PC-3 (cell line): ENCODE measurements at regions of chr3 and their contacts with region 1.

Region 1: DNA sequence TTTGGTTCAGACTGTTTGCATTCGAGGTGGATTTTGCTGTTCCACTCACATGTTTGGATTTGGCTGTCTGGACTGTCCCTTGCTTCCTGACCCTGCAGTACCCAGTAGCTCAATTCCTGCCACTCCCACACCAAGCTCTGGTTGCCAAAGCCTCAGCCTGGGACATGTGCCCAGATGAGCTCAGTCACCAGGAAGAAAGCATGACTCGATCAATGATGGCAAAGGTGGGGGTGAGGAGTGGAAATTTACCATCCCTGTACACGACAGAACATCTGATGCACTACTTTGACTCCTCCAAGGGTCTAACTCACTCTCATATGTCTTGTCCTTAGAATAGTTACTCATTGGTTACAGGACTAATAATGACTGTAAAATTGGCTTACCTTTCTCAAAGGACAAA is 45.2 kb downstream of the ZNF385D start:
- DNase-seq: peak; percentile 97
- ATAC-seq: peak; percentile 98
- H3K4me3 ChIP-seq: no peak overlapping the region
- H3K27ac ChIP-seq: peak overlapping the region; percentile 92
- H3K4me1 ChIP-seq: peaks cover 24% of the 10 kb centered on the region
- H3K27me3 ChIP-seq: no peaks in the 10 kb centered on the region
- CTCF ChIP-seq: no peak

Region 2: DNA sequence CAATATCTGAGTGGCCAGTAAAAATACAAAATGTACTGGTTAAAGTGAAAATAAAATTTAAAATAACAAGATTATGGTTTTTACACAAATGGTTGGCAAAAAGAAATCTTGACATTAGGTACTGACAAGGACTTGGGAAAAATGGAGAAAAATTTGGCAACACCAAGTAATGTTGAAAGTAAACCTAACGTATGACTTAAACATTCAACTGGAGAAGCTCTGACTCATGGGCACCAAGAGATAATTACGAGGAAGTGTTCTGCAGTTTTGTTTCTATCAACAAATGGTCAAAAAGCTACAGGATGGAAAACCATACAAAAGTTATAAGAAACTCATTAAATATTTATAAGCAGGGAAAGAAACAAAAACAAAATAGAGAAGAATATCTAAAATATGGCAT is 132.5 kb before region 1 on chr3:
- CTCF ChIA-PET with region 1: no interaction called
- POLR2A ChIA-PET with region 1: no interaction called
- intact Hi-C with region 1: loop called (anchors 5 kb)
- DNase-seq: peak; percentile 18
- ATAC-seq: no peak
- H3K4me3 ChIP-seq: no peak overlapping the region
- H3K27ac ChIP-seq: no peak overlapping the region
- H3K4me1 ChIP-seq: peaks cover 15% of the 10 kb centered on the region; the same call in 1 of the 2 replicates
- H3K27me3 ChIP-seq: no peaks in the 10 kb centered on the region
- CTCF ChIP-seq: no peak

Region 3: DNA sequence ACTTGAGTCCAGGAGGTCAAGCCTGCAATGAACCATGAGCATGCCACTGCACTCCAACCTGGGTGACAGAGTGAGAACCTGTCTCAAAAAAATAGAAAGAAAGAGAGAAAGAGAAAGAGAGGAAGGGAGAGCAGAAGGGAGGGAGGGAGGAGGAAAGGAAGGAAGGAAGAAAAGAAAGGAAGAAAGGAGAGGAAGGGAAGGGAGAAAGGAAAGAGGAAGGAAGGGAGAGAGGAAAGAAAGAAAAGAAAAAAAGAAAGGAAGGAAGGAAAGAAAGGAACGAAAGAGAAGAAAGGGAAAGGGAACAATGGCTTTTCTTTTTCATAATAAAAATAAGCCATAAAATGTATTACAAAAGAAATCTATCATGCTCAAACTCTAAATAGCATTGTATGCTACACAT is 71.7 kb before region 1 on chr3:
- CTCF ChIA-PET with region 1: no interaction called
- POLR2A ChIA-PET with region 1: no interaction called
- intact Hi-C with region 1: no loop called
- DNase-seq: no peak
- ATAC-seq: no peak
- H3K4me3 ChIP-seq: no peak overlapping the region
- H3K27ac ChIP-seq: no peak overlapping the region
- H3K4me1 ChIP-seq: no peaks in the 10 kb centered on the region
- H3K27me3 ChIP-seq: no peaks in the 10 kb centered on the region
- CTCF ChIP-seq: no peak

Region 4: GRCh38 chr3:21734746-21735145 is 29.0 kb after region 1 on chr3:
- CTCF ChIA-PET with region 1: no interaction called
- POLR2A ChIA-PET with region 1: no interaction called
- intact Hi-C with region 1: no loop called
- DNase-seq: no peak
- ATAC-seq: no peak
- H3K4me3 ChIP-seq: no peak overlapping the region
- H3K27ac ChIP-seq: no peak overlapping the region
- H3K4me1 ChIP-seq: no peaks in the 10 kb centered on the region
- H3K27me3 ChIP-seq: no peaks in the 10 kb centered on the region
- CTCF ChIP-seq: no peak

Region 5: DNA sequence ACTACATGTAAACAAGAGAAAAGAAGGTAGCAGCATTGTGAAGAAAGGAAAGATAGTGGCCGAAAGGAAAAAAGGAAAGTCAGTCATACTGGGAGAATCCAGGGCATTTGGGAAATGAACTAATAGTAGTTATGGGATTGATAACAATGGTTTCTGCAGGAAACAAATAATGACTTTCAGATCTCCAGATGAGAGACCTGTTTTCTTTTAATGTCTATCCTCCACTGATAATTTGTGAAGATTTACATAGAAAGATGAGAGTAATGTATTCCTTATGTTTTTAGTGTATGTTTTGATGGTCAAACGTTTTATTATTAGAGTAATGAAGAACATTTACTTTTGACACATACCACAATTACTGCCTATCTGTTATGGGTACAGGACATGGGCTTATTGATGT is 60.2 kb after region 1 on chr3:
- CTCF ChIA-PET with region 1: no interaction called
- POLR2A ChIA-PET with region 1: no interaction called
- intact Hi-C with region 1: no loop called
- DNase-seq: no peak
- ATAC-seq: no peak
- H3K4me3 ChIP-seq: no peak overlapping the region
- H3K27ac ChIP-seq: no peak overlapping the region
- H3K4me1 ChIP-seq: no peaks in the 10 kb centered on the region
- H3K27me3 ChIP-seq: no peaks in the 10 kb centered on the region
- CTCF ChIP-seq: no peak